ENCODE measurements at regions of chr1 and their contacts with region 1.

Region 1: GRCh38 chr1:52056163-52056936 is at the start of gene BTF3L4:
- DNase-seq: peak; percentile 98
- ATAC-seq: peak; percentile 96
- H3K4me3 Mint-ChIP-seq: peak within 1 kb of the TSS; percentile 91
- H3K27ac Mint-ChIP-seq: peak within 1 kb of the TSS; percentile 99
- H3K4me1 Mint-ChIP-seq: peaks cover 40% of the 10 kb centered on the region
- H3K27me3 Mint-ChIP-seq: no peaks in the 10 kb centered on the region
- total RNA-seq, gene BTF3L4: 33.8 to 37.8 TPM

Region 2: GRCh38 chr1:51729156-51729823 is 327.1 kb before region 1 on chr1:
- CTCF ChIA-PET with region 1: no interaction called
- POLR2A ChIA-PET with region 1: interaction called, 4 read pairs
- intact Hi-C with region 1: loop called in 1 of 2 experiments (anchors 1 kb)
- DNase-seq: peak; percentile 97
- ATAC-seq: peak; percentile 97
- H3K4me3 Mint-ChIP-seq: peak overlapping the region; percentile 84
- H3K27ac Mint-ChIP-seq: peak overlapping the region; percentile 83
- H3K4me1 Mint-ChIP-seq: peaks cover 40% of the 10 kb centered on the region
- H3K27me3 Mint-ChIP-seq: no peaks in the 10 kb centered on the region

Region 3: GRCh38 chr1:52022133-52022532 is 34.2 kb before region 1 on chr1:
- CTCF ChIA-PET with region 1: no interaction called
- POLR2A ChIA-PET with region 1: no interaction called
- intact Hi-C with region 1: no loop called
- DNase-seq: no peak
- ATAC-seq: no peak
- H3K4me3 Mint-ChIP-seq: no peak overlapping the region
- H3K27ac Mint-ChIP-seq: no peak overlapping the region
- H3K4me1 Mint-ChIP-seq: no peaks in the 10 kb centered on the region
- H3K27me3 Mint-ChIP-seq: no peaks in the 10 kb centered on the region

Region 4: DNA sequence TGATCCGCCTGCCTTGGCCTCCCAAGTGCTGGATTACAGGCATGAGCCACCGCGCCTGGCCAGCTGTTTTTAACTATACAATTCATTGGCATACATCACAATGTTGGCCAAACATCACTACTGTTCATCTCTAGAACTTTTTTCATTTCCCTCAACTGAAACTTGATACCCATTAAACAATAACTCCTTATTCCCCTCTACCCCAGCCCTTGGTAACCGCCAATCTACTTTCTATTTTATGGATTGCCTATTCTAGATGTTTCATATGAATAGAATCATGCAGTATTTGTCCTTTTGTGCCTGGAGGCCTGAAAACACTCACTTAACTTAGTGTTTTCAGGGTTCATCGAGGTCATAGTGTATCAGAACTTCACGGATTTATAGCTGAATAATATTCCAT is 15.9 kb after region 1 on chr1:
- CTCF ChIA-PET with region 1: interaction called, 5 read pairs
- POLR2A ChIA-PET with region 1: interaction called, 12 read pairs
- intact Hi-C with region 1: no loop called
- DNase-seq: no peak
- ATAC-seq: no peak
- H3K4me3 Mint-ChIP-seq: no peak overlapping the region
- H3K27ac Mint-ChIP-seq: no peak overlapping the region
- H3K4me1 Mint-ChIP-seq: peaks cover 16% of the 10 kb centered on the region
- H3K27me3 Mint-ChIP-seq: no peaks in the 10 kb centered on the region

Region 5: GRCh38 chr1:52702886-52703787 is 646.8 kb after region 1 on chr1:
- CTCF ChIA-PET with region 1: no interaction called
- POLR2A ChIA-PET with region 1: no interaction called
- intact Hi-C with region 1: loop called in 1 of 2 experiments (anchors 2 kb)
- DNase-seq: peak; percentile 89
- ATAC-seq: peak; percentile 94
- H3K4me3 Mint-ChIP-seq: peak overlapping the region; percentile 79
- H3K27ac Mint-ChIP-seq: peak overlapping the region; percentile 93
- H3K4me1 Mint-ChIP-seq: peaks cover 16% of the 10 kb centered on the region
- H3K27me3 Mint-ChIP-seq: no peaks in the 10 kb centered on the region

Region 6: DNA sequence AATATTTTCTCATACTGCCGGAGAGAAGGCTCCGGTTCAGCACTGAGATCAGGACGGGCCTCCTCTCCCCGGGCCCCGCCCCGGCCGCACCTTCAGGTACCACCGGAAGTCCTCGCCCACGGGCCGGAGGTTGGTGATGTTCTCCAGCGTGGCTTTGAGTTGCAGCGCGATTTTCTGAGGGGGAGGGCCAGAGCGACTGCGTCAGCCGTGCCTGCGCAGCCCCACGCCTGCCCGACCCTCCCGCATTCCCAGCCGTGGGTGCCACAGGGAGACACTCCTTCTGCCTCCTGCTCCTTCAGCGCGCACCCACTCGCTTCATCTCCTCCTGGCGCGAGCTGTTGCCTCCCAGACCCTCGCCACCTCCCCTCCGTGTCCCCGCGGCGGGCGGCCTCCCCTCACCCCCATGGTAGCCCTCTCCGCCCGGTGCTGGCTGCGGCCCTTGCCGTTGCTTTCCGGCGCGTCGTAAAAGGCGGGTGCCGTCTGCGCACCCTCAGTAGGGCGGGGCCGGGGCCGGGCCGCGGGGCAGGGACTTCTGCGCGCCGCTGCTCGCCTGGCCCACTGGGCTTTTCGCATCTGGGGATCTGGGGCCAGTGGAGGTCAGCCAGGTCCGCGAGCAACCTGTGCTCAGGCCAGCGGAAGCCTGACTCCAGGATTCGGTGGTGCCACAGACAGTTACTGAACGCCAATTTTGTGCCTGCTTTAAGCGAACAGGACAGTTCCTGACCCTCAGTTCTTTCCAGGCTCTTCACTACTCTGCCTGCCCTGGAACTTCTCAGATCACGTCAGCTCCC is 1164.0 kb after region 1 on chr1 and contains the start of gene CZIB:
- CTCF ChIA-PET with region 1: no interaction called
- POLR2A ChIA-PET with region 1: no interaction called
- intact Hi-C with region 1: loop called in 1 of 2 experiments (anchors 1 kb)
- DNase-seq: peak; percentile 98
- ATAC-seq: peak; percentile 95
- H3K4me3 Mint-ChIP-seq: peak within 1 kb of the TSS; percentile 87
- H3K27ac Mint-ChIP-seq: peak within 1 kb of the TSS; percentile 94
- H3K4me1 Mint-ChIP-seq: peaks cover 24% of the 10 kb centered on the region
- H3K27me3 Mint-ChIP-seq: no peaks in the 10 kb centered on the region
- total RNA-seq, gene CZIB: 45.4 to 48.7 TPM

Measured in activated CD4-positive, alpha-beta T cell treated with anti-CD3 and anti-CD28 coated beads for 36 hours (primary cell).